ENCODE measurements at regions of chr1 and their contacts with region 1.

Region 1: DNA sequence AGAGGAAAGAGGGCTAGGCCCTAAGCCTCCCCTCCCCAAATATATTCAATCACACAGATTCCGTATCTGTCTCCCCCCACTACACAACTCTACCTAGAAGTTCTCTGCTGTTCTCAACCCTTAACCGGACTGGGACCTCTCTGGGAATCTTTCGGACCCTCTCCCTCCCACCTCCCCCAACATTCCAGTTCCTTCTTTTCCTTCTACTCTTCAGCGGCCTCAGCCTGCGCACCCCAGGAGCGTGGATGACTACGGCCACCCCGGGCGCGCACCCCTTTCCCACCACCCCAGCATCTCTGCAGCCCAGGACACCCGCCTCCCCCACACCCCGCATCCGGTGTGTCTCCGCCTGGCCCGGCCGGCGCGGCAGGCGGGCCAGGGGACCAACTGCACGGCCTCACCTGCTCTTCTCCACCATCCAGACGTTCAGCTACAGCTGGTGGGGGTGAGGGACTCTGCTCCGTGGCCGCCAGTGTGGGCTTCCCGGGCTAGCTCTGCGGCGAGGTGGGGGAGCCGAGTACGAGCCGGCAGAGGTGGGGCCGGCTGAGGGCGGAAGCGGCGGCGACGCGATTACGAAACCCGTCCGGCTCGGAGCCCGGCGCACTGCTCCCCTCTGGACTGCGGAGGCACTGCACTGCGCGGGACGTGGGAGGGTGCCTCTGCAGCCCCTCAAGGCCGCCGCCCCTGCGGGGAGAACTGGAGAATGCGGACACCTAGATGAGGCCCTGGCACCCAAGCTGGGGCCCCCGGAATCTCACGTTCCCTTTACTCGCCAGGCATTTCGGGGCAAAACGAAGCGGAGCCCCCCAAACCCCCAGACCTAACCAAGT is at the start of gene CDC42SE1:
- DNase-seq: peak; percentile 92
- CTCF ChIP-seq: peak; percentile 75

Region 2: DNA sequence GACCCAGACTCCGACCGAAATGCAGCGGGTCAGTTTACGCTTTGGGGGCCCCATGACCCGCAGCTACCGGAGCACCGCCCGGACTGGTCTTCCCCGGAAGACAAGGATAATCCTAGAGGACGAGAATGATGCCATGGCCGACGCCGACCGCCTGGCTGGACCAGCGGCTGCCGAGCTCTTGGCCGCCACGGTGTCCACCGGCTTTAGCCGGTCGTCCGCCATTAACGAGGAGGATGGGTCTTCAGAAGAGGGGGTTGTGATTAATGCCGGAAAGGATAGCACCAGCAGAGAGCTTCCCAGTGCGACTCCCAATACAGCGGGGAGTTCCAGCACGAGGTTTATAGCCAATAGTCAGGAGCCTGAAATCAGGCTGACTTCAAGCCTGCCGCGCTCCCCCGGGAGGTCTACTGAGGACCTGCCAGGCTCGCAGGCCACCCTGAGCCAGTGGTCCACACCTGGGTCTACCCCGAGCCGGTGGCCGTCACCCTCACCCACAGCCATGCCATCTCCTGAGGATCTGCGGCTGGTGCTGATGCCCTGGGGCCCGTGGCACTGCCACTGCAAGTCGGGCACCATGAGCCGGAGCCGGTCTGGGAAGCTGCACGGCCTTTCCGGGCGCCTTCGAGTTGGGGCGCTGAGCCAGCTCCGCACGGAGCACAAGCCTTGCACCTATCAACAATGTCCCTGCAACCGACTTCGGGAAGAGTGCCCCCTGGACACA is 11.2 kb before region 1 on chr1:
- CTCF ChIA-PET with region 1: interaction called, 69 read pairs
- POLR2A ChIA-PET with region 1: interaction called, 10 read pairs
- DNase-seq: peak; percentile 78
- CTCF ChIP-seq: peak; percentile 49